ENCODE measurements at regions of chr1 and their contacts with region 1.

Region 1: GRCh38 chr1:28648474-28649198 is at the start of gene RNU11:
- DNase-seq: peak; percentile 93
- ATAC-seq: peak; percentile 80
- H3K4me3 Mint-ChIP-seq: peak within 1 kb of the TSS; percentile 84
- H3K27ac Mint-ChIP-seq: peak within 1 kb of the TSS; percentile 99
- H3K4me1 Mint-ChIP-seq: peaks cover 32% of the 10 kb centered on the region
- H3K27me3 Mint-ChIP-seq: no peaks in the 10 kb centered on the region
- total RNA-seq, gene RNU11: not detected

Region 2: GRCh38 chr1:28668191-28668955 is 19.7 kb after region 1 on chr1 and contains the start of gene GMEB1:
- CTCF ChIA-PET with region 1: interaction called, 16 read pairs
- POLR2A ChIA-PET with region 1: interaction called, 185 read pairs
- DNase-seq: peak; percentile 89
- ATAC-seq: peak; percentile 76
- H3K4me3 Mint-ChIP-seq: peak within 1 kb of the TSS; percentile 87
- H3K27ac Mint-ChIP-seq: peak within 1 kb of the TSS; percentile 96
- H3K4me1 Mint-ChIP-seq: peaks cover 10% of the 10 kb centered on the region
- H3K27me3 Mint-ChIP-seq: no peaks in the 10 kb centered on the region
- total RNA-seq, gene GMEB1: 35.5 to 36.4 TPM

Region 3: GRCh38 chr1:28775121-28775944 is 126.7 kb after region 1 on chr1:
- CTCF ChIA-PET with region 1: no interaction called
- POLR2A ChIA-PET with region 1: interaction called, 11 read pairs
- DNase-seq: peak; percentile 71
- ATAC-seq: peak; percentile 95
- H3K4me3 Mint-ChIP-seq: peak overlapping the region; percentile 63
- H3K27ac Mint-ChIP-seq: peak overlapping the region; percentile 43
- H3K4me1 Mint-ChIP-seq: peaks cover 11% of the 10 kb centered on the region
- H3K27me3 Mint-ChIP-seq: peaks cover 3% of the 10 kb centered on the region

Measured in activated CD8-positive, alpha-beta T cell treated with anti-CD3 and anti-CD28 coated beads, Interleukin-2, amount 10 ng/mL, durations not matched to agents 7 days and 5 days (primary cell).